ENCODE measurements at regions of chr18 and their contacts with region 1.

Region 1: DNA sequence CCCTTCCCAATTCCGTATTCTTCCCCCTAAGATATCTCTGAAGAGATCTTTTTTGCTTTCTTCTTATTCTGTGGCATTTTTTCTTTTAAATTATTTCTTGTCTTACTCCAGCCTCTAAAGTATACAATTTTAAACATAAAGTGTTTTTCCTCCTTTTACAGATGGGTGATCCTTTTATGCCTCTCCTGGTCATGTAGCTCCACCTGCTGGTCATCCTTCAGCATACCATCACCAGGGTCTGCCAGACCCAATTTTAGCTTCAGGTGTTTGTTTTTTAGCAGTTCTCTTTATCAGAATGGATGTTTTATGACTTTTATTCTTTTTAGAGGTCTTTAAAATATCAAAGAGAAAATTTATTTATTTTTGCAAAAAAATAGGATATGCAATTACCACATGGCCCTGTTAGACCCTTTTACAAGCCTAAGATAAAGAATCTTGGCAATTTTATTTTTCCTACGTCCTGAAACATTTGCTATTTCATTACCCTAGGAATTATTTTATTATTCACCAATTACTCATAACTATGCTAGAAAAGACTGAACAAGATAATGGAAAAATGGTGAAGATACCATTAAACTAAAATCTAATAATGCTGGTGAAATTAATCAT is 55.5 kb downstream of the PIGN start:
- DNase-seq: peak in 1 of 2 donors; percentile 27
- H3K4me3 ChIP-seq: no peak overlapping the region
- H3K27ac ChIP-seq: no peak overlapping the region
- H3K4me1 ChIP-seq: no peaks in the 10 kb centered on the region
- H3K27me3 ChIP-seq: no peaks in the 10 kb centered on the region
- CTCF ChIP-seq: peak; percentile 86 to 93 (median 86)
- POLR2A ChIP-seq: no peak

Region 2: DNA sequence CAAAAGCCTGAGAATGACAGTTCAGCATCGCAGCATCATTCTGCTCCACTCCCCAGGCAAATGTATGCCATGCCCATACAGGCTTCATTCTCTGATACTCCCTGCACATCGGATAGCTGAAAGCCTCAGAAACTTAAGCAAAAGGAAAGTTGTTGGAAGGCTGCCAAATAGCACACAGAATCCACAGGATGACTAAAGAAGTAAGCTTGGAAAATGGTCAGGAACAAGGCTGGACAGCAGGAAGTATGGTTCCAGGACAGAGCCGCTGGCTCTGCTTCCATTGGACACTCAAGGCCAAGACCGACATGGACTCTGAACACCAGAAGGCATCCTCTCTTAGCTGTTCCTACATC is 541.7 kb before region 1 on chr18:
- intact Hi-C with region 1: no loop called
- DNase-seq: no peak
- H3K4me3 ChIP-seq: no peak overlapping the region
- H3K27ac ChIP-seq: no peak overlapping the region
- H3K4me1 ChIP-seq: no peaks in the 10 kb centered on the region
- H3K27me3 ChIP-seq: no peaks in the 10 kb centered on the region
- CTCF ChIP-seq: no peak
- POLR2A ChIP-seq: no peak

Region 3: DNA sequence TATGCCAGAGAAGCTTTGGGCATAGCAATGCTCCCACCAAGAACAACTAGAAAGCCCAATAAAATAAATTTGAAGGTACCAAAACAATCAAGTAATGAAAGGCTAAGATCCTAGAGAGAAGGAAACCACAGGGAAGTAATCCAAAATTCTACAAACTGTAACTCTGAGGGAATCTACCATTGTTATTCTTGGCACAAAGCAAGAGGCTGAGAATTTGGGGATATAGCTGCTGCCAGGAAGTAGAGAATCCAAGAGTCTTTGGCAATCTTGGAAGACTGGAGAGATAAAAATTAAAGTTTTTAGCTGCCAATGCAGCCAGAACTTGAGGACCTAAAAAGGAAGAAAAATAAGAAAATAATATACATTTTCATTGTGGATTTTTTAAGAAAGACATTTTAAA is 13.1 kb before region 1 on chr18:
- intact Hi-C with region 1: no loop called
- DNase-seq: no peak
- H3K4me3 ChIP-seq: no peak overlapping the region
- H3K27ac ChIP-seq: no peak overlapping the region
- H3K4me1 ChIP-seq: no peaks in the 10 kb centered on the region
- H3K27me3 ChIP-seq: no peaks in the 10 kb centered on the region
- CTCF ChIP-seq: no peak
- POLR2A ChIP-seq: no peak

Region 4: GRCh38 chr18:62214790-62215189 is 83.4 kb after region 1 on chr18:
- intact Hi-C with region 1: loop called (anchors 5 kb)
- DNase-seq: no peak
- H3K4me3 ChIP-seq: no peak overlapping the region
- H3K27ac ChIP-seq: no peak overlapping the region
- H3K4me1 ChIP-seq: no peaks in the 10 kb centered on the region
- H3K27me3 ChIP-seq: no peaks in the 10 kb centered on the region
- CTCF ChIP-seq: no peak
- POLR2A ChIP-seq: no peak

Measured in breast epithelium (tissue), 4 donors.